ENCODE measurements at regions of chr16 and their contacts with region 1.

Region 1: GRCh38 chr16:68229431-68230198 is 6.3 kb downstream of the ESRP2 start:
- DNase-seq: no peak
- H3K4me3 ChIP-seq: no peak overlapping the region
- H3K27ac ChIP-seq: no peak overlapping the region
- H3K4me1 ChIP-seq: peaks cover 26% of the 10 kb centered on the region
- H3K27me3 ChIP-seq: no peaks in the 10 kb centered on the region
- CTCF ChIP-seq: peak; percentile 92

Region 2: DNA sequence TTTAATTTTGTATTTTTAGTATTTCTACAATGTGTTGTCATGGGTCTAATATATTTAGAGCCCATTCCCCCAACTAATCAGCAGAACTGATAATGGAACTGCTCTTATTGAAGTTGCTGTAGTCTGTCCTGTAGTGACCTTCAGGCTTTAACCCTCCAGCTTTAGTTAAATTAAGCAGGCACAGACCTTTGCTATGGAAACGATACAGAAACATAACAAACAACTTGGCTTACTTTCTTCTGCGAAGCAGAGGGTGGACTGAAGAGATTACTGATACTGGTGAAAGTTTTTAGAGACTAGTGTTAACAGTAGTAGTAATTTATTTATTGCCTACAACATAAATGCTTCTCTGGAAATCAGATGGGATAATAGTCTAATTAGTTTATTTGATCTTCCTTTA is 83.0 kb before region 1 on chr16:
- intact Hi-C with region 1: loop called (anchors 5 kb)
- DNase-seq: no peak
- H3K4me3 ChIP-seq: no peak overlapping the region
- H3K27ac ChIP-seq: peak overlapping the region; percentile 66
- H3K4me1 ChIP-seq: peaks cover 47% of the 10 kb centered on the region
- H3K27me3 ChIP-seq: no peaks in the 10 kb centered on the region
- CTCF ChIP-seq: no peak

Region 3: GRCh38 chr16:68287276-68288251 is 57.9 kb after region 1 on chr16:
- intact Hi-C with region 1: no loop called
- DNase-seq: peak; percentile 80
- H3K4me3 ChIP-seq: no peak overlapping the region
- H3K27ac ChIP-seq: peak overlapping the region; percentile 87
- H3K4me1 ChIP-seq: peaks cover 93% of the 10 kb centered on the region
- H3K27me3 ChIP-seq: no peaks in the 10 kb centered on the region
- CTCF ChIP-seq: peak; percentile 43

Measured in left ventricle myocardium inferior (tissue), 1 donor.